ENCODE measurements at regions of chr9 and their contacts with region 1.

Region 1: DNA sequence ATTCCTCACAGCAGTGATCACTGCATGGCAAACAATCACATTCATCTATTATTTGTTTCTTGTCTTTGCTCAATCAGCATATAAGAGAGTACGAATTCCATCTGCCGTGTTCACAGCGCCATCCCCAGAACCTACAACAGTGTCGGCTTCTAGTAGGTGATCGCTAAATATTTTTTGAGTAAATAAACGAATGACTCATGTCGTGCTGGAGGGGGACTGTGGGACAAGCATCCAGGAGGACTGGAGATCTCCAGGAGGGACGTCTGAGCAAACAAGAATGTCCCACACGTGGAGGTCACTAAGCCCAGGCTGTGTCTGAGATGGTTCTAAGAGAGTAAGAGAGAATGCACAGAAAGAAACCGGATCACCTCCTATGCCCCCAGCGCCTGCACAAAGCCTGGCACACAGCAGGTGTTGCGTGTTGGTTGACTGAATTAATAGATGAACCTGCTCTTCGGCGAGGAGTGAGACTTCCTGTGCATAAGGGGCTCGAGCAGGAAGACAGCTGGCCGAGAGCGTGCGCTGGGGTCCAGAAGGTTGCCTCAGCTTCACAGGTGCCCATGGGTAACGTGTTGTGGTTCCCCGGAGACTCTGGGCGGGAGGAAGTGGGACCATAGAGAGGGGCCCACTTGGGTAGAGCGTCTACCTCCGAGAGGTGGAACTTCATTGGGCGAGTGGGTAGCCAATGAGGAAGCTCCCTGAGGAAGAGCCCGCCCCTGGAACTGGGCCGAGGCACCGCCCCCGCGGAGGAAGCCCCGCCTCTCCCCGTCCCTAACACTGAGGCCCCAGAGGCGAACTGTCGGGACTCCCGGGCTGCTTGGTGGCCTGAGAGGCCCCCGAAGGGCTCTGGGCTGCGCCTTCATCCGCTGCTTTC is 193.0 kb downstream of the MELK start:
- DNase-seq: peak; percentile 82
- ATAC-seq: peak; percentile 93
- H3K4me3 ChIP-seq: peak overlapping the region; percentile 22 to 63 (median 37); a peak in 5 of 6 replicates
- H3K27ac ChIP-seq: no peak overlapping the region
- H3K4me1 ChIP-seq: peaks cover 19% of the 10 kb centered on the region
- H3K27me3 ChIP-seq: peaks cover 0 to 36% of the 10 kb centered on the region in 2 experiments; a peak in 3 of 5 replicates
- CTCF ChIP-seq: peak; percentile 16; the same call in 1 of the 2 replicates
- EP300 ChIP-seq: no peak
- POLR2A ChIP-seq: peak in 1 of 2 experiments; percentile 69; a peak in 2 of 4 replicates
- RAD21 ChIP-seq: no peak

Region 2: GRCh38 chr9:36781533-36781932 is 15.8 kb after region 1 on chr9:
- CTCF ChIA-PET with region 1: no interaction called
- POLR2A ChIA-PET with region 1: no interaction called
- in situ Hi-C with region 1: no loop called
- intact Hi-C with region 1: loop called (anchors 2 kb)
- DNase-seq: peak; percentile 18
- ATAC-seq: peak; percentile 56; the same call in 1 of the 3 replicates
- H3K4me3 ChIP-seq: no peak overlapping the region
- H3K27ac ChIP-seq: no peak overlapping the region
- H3K4me1 ChIP-seq: no peaks in the 10 kb centered on the region
- H3K27me3 ChIP-seq: peaks cover 2 to 35% of the 10 kb centered on the region in 2 experiments; a peak in 3 of 5 replicates
- CTCF ChIP-seq: no peak
- EP300 ChIP-seq: no peak
- POLR2A ChIP-seq: no peak
- RAD21 ChIP-seq: no peak

Measured in HepG2 (cell line).